ENCODE measurements at regions of chr3 and their contacts with region 1.

Region 1: DNA sequence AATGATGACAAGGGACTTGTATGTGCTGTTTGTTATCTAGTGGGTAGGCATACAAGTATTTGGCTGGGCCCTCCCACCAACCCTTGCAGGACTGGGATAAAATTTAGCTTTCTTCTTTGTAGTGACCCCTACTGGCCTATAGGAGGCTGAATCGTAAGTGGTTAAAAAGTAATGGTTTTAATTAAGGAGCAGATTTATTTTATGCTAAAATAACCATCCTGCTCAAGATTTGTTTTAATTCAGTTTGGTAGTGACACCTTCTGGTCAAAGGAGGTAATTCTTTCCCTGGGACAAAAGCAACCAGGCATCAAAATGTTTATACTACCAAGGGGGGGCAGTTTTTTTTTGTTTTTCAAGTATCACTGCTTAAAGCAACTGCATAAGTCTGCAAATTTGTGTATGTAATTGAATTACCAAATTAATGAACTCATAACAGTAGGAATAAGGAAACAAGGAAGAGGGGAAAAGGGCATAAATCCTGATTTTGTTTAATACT is 70.7 kb downstream of the TOP2B start:
- DNase-seq: peak; percentile 64
- H3K4me3 Mint-ChIP-seq: no peak overlapping the region
- H3K27ac Mint-ChIP-seq: no peak overlapping the region
- H3K4me1 Mint-ChIP-seq: peaks cover 5% of the 10 kb centered on the region
- H3K27me3 Mint-ChIP-seq: no peaks in the 10 kb centered on the region
- CTCF ChIP-seq: peak; percentile 60

Region 2: GRCh38 chr3:24773798-24774197 is 820.3 kb before region 1 on chr3:
- CTCF ChIA-PET with region 1: interaction called, 58 read pairs
- POLR2A ChIA-PET with region 1: interaction called, 6 read pairs
- intact Hi-C with region 1: loop called (anchors 1 kb)
- DNase-seq: peak; percentile 72
- H3K4me3 Mint-ChIP-seq: no peak overlapping the region
- H3K27ac Mint-ChIP-seq: no peak overlapping the region
- H3K4me1 Mint-ChIP-seq: peaks cover 6% of the 10 kb centered on the region
- H3K27me3 Mint-ChIP-seq: peaks cover 17% of the 10 kb centered on the region
- CTCF ChIP-seq: peak; percentile 77

Region 3: GRCh38 chr3:24963762-24964625 is 630.1 kb before region 1 on chr3:
- CTCF ChIA-PET with region 1: interaction called, 31 read pairs
- POLR2A ChIA-PET with region 1: interaction called, 3 read pairs
- intact Hi-C with region 1: loop called (anchors 1 kb)
- DNase-seq: peak; percentile 47
- H3K4me3 Mint-ChIP-seq: no peak overlapping the region
- H3K27ac Mint-ChIP-seq: no peak overlapping the region
- H3K4me1 Mint-ChIP-seq: peaks cover 8% of the 10 kb centered on the region
- H3K27me3 Mint-ChIP-seq: no peaks in the 10 kb centered on the region
- CTCF ChIP-seq: peak; percentile 36

Region 4: DNA sequence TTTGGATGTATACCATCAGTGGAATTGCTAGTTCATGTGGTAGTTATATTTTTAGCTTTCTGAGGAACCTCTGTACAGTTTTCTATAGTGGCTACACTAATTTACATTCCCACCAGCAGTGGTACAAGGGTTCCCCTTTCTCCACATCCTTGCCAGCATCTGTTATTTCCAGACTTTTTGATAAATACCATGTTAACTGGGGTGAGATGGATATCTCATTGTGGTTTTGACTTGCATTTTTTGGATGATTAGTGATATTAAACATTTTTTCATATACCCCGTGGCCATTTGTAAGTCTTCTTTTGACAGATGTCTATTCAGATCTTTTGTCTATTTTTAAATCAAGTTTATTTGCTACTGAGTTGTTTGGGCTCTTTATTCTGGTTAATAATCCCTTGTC is 621.6 kb before region 1 on chr3:
- CTCF ChIA-PET with region 1: interaction called, 20 read pairs
- POLR2A ChIA-PET with region 1: interaction called, 3 read pairs
- intact Hi-C with region 1: no loop called
- DNase-seq: no peak
- H3K4me3 Mint-ChIP-seq: no peak overlapping the region
- H3K27ac Mint-ChIP-seq: no peak overlapping the region
- H3K4me1 Mint-ChIP-seq: no peaks in the 10 kb centered on the region
- H3K27me3 Mint-ChIP-seq: no peaks in the 10 kb centered on the region
- CTCF ChIP-seq: no peak

Region 5: DNA sequence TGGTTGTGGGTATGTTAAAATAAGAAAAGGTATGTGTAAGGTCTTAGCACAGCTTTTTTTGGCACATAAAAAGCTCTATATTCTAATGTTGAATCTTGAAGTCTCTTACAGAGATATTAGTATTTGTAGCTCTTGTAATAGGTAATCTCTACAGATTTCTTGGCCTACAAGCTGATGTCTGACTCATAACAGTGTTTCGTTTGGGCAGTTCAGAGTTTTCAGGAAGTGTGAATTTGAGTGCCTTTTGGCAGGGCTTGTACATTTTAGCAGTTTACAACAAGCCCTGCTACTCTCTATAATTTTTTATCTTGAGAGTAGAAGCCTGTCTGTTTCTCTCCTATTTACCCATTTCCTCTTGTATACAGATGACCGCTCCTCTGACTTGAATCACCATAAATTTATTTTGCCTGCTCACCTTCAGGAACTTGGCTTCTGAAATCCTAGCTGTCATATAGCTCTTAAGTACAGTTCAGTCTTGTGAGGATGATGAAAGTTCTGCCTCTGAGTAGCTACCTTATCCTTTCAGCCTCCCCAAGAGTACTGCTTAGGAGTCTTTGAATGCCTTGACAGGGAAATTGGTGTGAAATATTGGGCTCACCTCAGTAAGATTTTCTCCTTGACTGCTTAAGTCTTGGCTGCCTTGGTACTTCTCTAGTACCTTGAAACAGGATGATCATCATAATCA is 585.9 kb before region 1 on chr3:
- CTCF ChIA-PET with region 1: interaction called, 11 read pairs
- POLR2A ChIA-PET with region 1: interaction called, 3 read pairs
- intact Hi-C with region 1: no loop called
- DNase-seq: peak; percentile 65
- H3K4me3 Mint-ChIP-seq: no peak overlapping the region
- H3K27ac Mint-ChIP-seq: peak overlapping the region; percentile 40
- H3K4me1 Mint-ChIP-seq: peaks cover 9% of the 10 kb centered on the region
- H3K27me3 Mint-ChIP-seq: no peaks in the 10 kb centered on the region
- CTCF ChIP-seq: no peak

Region 6: GRCh38 chr3:25021816-25022215 is 572.2 kb before region 1 on chr3:
- CTCF ChIA-PET with region 1: interaction called, 82 read pairs
- POLR2A ChIA-PET with region 1: interaction called, 3 read pairs
- intact Hi-C with region 1: loop called (anchors 1 kb)
- DNase-seq: peak; percentile 33
- H3K4me3 Mint-ChIP-seq: no peak overlapping the region
- H3K27ac Mint-ChIP-seq: no peak overlapping the region
- H3K4me1 Mint-ChIP-seq: no peaks in the 10 kb centered on the region
- H3K27me3 Mint-ChIP-seq: no peaks in the 10 kb centered on the region
- CTCF ChIP-seq: peak; percentile 54

Region 7: GRCh38 chr3:25604107-25604805 is 10.2 kb after region 1 on chr3:
- CTCF ChIA-PET with region 1: interaction called, 30 read pairs
- POLR2A ChIA-PET with region 1: interaction called, 4 read pairs
- intact Hi-C with region 1: no loop called
- DNase-seq: peak; percentile 54
- H3K4me3 Mint-ChIP-seq: no peak overlapping the region
- H3K27ac Mint-ChIP-seq: peak overlapping the region; percentile 50
- H3K4me1 Mint-ChIP-seq: peaks cover 4% of the 10 kb centered on the region
- H3K27me3 Mint-ChIP-seq: no peaks in the 10 kb centered on the region
- CTCF ChIP-seq: no peak

Measured in MCF 10A (cell line).